Mammary epithelial cell (primary cell): ENCODE measurements at regions of chr14 and their contacts with region 1.

Region 1: DNA sequence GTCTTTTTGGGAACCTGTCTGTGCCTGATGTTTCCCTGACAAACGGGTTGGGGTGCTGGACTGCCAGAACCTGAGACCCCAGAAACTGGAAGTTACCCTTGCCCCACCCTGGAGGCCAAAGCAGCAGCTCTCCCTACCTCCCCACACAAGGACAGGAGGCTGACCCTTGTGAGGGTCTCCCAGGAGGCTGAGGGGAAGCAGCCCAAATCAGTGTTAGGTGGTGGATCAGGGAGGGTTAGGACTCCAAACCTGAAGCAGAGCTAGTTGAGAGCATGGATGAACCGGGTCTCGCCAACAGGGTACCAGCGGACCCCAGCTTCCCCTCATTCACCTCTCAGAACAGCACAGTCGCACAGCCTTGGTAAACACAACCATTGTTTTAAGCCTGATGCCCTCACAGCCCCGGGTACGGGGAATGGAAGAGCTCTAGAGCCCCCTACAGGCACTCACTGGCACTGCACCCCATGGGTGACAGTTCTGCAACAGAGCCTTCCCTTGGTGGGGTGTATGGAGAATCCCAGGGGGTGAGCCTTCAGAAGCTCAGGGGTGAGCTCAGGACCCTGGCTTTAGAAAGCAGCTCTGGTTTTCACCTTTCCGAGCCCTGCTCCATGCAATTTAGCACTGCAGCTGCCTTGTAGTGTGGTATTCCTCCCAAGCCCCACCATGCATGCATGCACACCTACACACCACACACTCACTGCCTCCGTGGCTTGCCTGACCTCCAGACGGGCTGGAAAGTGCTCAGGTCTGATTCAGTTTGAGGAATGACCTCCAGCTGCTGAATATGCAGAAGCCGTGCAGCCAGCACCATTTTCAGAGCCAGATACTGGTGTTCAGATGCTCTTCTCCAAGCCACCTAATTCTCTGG is 11.2 kb downstream of the ESRRB start:
- DNase-seq: peak; percentile 53
- H3K4me3 ChIP-seq: no peak overlapping the region
- H3K27ac ChIP-seq: no peak overlapping the region
- H3K4me1 ChIP-seq: no peaks in the 10 kb centered on the region
- H3K27me3 ChIP-seq: peaks cover 5% of the 10 kb centered on the region
- CTCF ChIP-seq: peak; percentile 99 to 100

Region 2: DNA sequence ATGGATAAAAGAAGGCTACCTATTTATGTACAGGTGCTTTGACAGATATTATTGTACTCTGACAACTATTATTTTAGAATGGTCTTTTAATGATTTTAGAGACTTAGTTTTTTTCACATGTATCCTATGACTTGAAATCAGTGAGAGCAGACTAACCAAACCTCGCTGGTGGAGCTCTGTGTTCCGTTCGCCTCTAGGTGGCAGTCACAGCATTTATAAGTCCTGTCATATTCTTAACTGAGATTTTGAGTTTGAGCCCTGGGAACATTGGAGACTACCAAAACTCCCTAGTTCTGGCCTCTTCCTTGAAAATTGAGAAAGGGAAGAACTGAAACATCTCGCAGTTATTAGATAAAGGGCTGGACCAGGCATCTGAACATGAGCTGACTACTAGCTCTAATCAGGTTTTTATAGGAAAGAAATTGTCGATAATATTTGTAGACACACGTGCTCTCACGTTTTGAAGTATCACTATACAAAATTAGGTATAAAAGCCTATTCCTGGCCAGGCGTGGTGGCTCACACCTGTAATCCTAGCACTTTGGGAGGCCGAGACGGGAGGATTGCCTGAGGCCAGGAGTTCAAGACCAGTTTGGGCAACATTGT is 677.8 kb before region 1 on chr14:
- CTCF ChIA-PET with region 1: no interaction called
- dilution Hi-C with region 1: no loop called
- in situ Hi-C with region 1: no loop called
- intact Hi-C with region 1: loop called (anchors 1 kb)
- DNase-seq: peak; percentile 49
- H3K4me3 ChIP-seq: no peak overlapping the region
- H3K27ac ChIP-seq: no peak overlapping the region
- H3K4me1 ChIP-seq: peaks cover 19% of the 10 kb centered on the region
- H3K27me3 ChIP-seq: no peaks in the 10 kb centered on the region
- CTCF ChIP-seq: peak; percentile 73 to 87

Region 3: GRCh38 chr14:75906676-75907280 is 480.4 kb before region 1 on chr14:
- CTCF ChIA-PET with region 1: no interaction called
- dilution Hi-C with region 1: no loop called
- in situ Hi-C with region 1: no loop called
- intact Hi-C with region 1: loop called (anchors 1 kb)
- DNase-seq: peak; percentile 33
- H3K4me3 ChIP-seq: no peak overlapping the region
- H3K27ac ChIP-seq: no peak overlapping the region
- H3K4me1 ChIP-seq: peaks cover 10% of the 10 kb centered on the region
- H3K27me3 ChIP-seq: no peaks in the 10 kb centered on the region
- CTCF ChIP-seq: peak; percentile 82 to 93

Region 4: GRCh38 chr14:76050797-76051392 is 336.3 kb before region 1 on chr14:
- CTCF ChIA-PET with region 1: no interaction called
- dilution Hi-C with region 1: no loop called
- in situ Hi-C with region 1: loop called (anchors 10 to 25 kb)
- intact Hi-C with region 1: loop called (anchors 1 kb)
- DNase-seq: peak; percentile 33
- H3K4me3 ChIP-seq: no peak overlapping the region
- H3K27ac ChIP-seq: no peak overlapping the region
- H3K4me1 ChIP-seq: no peaks in the 10 kb centered on the region
- H3K27me3 ChIP-seq: no peaks in the 10 kb centered on the region
- CTCF ChIP-seq: peak; percentile 61 to 72

Region 5: DNA sequence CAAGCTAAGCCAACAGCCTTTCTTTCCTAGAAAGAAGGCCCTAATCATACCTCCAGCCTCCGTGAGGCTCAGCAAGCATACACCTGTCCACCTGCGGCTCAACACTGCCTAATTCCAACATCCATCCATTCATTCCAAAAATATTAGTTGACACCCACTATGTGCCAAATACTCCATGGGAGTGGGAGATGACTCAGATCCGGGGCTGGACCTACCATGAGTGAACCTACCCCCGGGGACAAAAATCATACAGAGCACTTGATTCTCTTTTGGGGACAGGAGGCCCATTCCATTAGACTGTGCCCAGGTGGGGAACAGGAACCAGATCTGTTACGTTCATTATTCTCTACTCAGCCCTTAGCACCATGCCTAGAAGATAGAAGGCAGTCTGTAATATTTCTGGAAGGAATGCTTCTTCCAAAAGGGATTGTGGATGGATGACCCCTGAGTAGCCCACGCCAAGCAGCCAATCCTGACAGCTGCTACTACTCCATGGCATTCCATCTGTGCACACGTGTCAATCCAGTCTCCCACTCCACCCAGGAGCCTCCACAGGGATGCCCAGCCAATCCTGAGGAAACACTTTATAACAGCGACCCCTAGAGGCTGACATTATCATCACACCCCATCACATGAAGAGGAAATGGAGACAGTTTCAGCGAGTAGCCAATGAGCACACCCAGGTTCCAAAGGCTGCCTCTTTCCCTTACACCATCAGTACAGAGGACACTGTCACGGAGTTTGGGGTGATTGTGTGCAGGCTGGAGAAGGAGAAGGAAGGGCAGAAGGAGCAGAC is 159.5 kb after region 1 on chr14:
- CTCF ChIA-PET with region 1: no interaction called
- dilution Hi-C with region 1: no loop called
- in situ Hi-C with region 1: no loop called
- intact Hi-C with region 1: loop called (anchors 10 kb)
- DNase-seq: peak; percentile 61
- H3K4me3 ChIP-seq: no peak overlapping the region
- H3K27ac ChIP-seq: no peak overlapping the region
- H3K4me1 ChIP-seq: peaks cover 30% of the 10 kb centered on the region
- H3K27me3 ChIP-seq: no peaks in the 10 kb centered on the region
- CTCF ChIP-seq: peak; percentile 65 to 77